CD8-positive, alpha-beta T cell (primary cell): ENCODE measurements at regions of chr17 and their contacts with region 1.

Region 1: DNA sequence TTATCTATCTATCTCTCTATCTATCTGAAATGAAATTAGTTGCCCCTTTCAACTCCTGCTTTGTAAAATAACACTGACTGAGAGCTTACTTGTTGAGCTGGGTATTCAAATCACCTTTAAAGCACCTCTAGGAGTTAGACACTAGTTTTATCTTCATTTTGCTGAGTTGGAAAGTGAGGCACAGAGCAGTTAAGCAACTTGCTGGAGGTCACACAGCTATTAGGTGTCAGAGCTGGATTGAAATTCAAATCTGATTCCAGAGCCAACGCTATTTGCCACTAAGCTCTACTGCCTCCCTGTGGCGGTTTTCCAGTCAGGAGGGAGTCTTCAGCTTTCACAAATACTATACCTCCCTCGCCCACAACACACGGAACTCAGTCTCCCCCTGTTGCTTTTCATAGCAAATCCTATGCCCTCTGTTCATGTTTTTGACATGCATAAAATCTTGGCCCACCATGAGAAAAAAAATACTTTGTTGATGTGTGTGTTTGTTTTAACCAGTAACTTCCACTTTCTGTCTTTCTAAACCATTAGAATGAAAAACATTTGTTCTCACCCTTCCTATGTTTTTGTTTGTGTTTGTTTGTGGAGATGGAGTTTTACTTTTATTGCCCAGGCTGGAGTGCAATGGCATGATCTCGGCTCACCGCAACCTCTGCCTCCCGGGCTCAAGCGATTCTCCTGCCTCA is 74.8 kb upstream of the SMURF2 start:
- DNase-seq: peak; percentile 24 to 76 (median 55)
- ATAC-seq: peak; percentile 69
- H3K4me3 ChIP-seq: no peak overlapping the region
- H3K4me3 Mint-ChIP-seq: no peak overlapping the region
- H3K27ac ChIP-seq: no peak overlapping the region
- H3K27ac Mint-ChIP-seq: no peak overlapping the region
- H3K4me1 ChIP-seq: no peaks in the 10 kb centered on the region
- H3K4me1 Mint-ChIP-seq: peaks cover 22% of the 10 kb centered on the region
- H3K27me3 ChIP-seq: no peaks in the 10 kb centered on the region
- H3K27me3 Mint-ChIP-seq: no peaks in the 10 kb centered on the region
- CTCF ChIP-seq: peak; percentile 55

Region 2: GRCh38 chr17:64608540-64608981 is 128.4 kb before region 1 on chr17:
- CTCF ChIA-PET with region 1: no interaction called
- POLR2A ChIA-PET with region 1: no interaction called
- intact Hi-C with region 1: loop called in 1 of 2 experiments (anchors 10 kb)
- DNase-seq: no peak
- ATAC-seq: peak; percentile 58
- H3K4me3 ChIP-seq: no peak overlapping the region
- H3K4me3 Mint-ChIP-seq: no peak overlapping the region
- H3K27ac ChIP-seq: no peak overlapping the region
- H3K27ac Mint-ChIP-seq: peak overlapping the region; percentile 34
- H3K4me1 ChIP-seq: peaks cover 9% of the 10 kb centered on the region
- H3K4me1 Mint-ChIP-seq: peaks cover 39% of the 10 kb centered on the region
- H3K27me3 ChIP-seq: no peaks in the 10 kb centered on the region
- H3K27me3 Mint-ChIP-seq: no peaks in the 10 kb centered on the region
- CTCF ChIP-seq: no peak

Region 3: DNA sequence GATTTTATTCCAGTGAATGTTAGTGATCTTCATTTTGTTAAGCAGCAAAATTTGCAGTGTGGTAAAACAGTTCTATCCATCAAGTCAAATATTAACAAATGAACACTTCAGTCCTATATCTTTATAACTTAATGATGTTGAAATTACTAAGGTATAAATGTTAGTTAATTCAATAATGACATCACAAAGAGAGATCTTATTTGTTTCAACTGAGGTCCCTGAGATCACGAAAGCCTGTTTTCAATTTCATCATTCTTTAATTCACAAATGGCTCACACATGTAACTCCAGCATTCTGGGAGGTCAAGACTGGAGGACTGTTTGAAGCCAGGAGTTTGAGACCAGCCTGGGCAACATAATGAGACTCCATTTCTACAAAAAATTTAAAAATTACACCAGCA is 88.7 kb before region 1 on chr17:
- CTCF ChIA-PET with region 1: interaction called, 11 read pairs
- POLR2A ChIA-PET with region 1: no interaction called
- intact Hi-C with region 1: loop called (anchors 1 to 10 kb)
- DNase-seq: no peak
- ATAC-seq: no peak
- H3K4me3 ChIP-seq: no peak overlapping the region
- H3K4me3 Mint-ChIP-seq: no peak overlapping the region
- H3K27ac ChIP-seq: no peak overlapping the region
- H3K27ac Mint-ChIP-seq: no peak overlapping the region
- H3K4me1 ChIP-seq: peaks cover 7% of the 10 kb centered on the region
- H3K4me1 Mint-ChIP-seq: peaks cover 51% of the 10 kb centered on the region
- H3K27me3 ChIP-seq: no peaks in the 10 kb centered on the region
- H3K27me3 Mint-ChIP-seq: no peaks in the 10 kb centered on the region
- CTCF ChIP-seq: no peak

Region 4: GRCh38 chr17:64653325-64653984 is 83.5 kb before region 1 on chr17:
- CTCF ChIA-PET with region 1: interaction called, 11 read pairs
- POLR2A ChIA-PET with region 1: no interaction called
- intact Hi-C with region 1: loop called (anchors 1 to 10 kb)
- DNase-seq: no peak
- ATAC-seq: no peak
- H3K4me3 ChIP-seq: no peak overlapping the region
- H3K4me3 Mint-ChIP-seq: no peak overlapping the region
- H3K27ac ChIP-seq: no peak overlapping the region
- H3K27ac Mint-ChIP-seq: peak overlapping the region; percentile 25
- H3K4me1 ChIP-seq: peaks cover 16% of the 10 kb centered on the region
- H3K4me1 Mint-ChIP-seq: peaks cover 63% of the 10 kb centered on the region
- H3K27me3 ChIP-seq: no peaks in the 10 kb centered on the region
- H3K27me3 Mint-ChIP-seq: no peaks in the 10 kb centered on the region
- CTCF ChIP-seq: no peak

Region 5: GRCh38 chr17:64661976-64662773 is 74.8 kb before region 1 on chr17 and contains the start of gene SMURF2:
- CTCF ChIA-PET with region 1: interaction called, 3 read pairs
- POLR2A ChIA-PET with region 1: no interaction called
- intact Hi-C with region 1: loop called in 1 of 2 experiments (anchors 5 kb)
- DNase-seq: peak; percentile 63 to 90 (median 80)
- ATAC-seq: peak; percentile 90
- H3K4me3 ChIP-seq: peak within 1 kb of the TSS; percentile 71 to 79
- H3K4me3 Mint-ChIP-seq: peak within 1 kb of the TSS; percentile 98
- H3K27ac ChIP-seq: peak within 1 kb of the TSS; percentile 56 to 63
- H3K27ac Mint-ChIP-seq: peak within 1 kb of the TSS; percentile 95
- H3K4me1 ChIP-seq: peaks cover 31% of the 10 kb centered on the region
- H3K4me1 Mint-ChIP-seq: peaks cover 44% of the 10 kb centered on the region
- H3K27me3 ChIP-seq: no peaks in the 10 kb centered on the region
- H3K27me3 Mint-ChIP-seq: no peaks in the 10 kb centered on the region
- CTCF ChIP-seq: no peak
- total RNA-seq, gene SMURF2: 27.3 to 28.1 TPM